PC-3 (cell line): ENCODE measurements at regions of chr14 and their contacts with region 1.

Region 1: GRCh38 chr14:21241218-21241819 is 27.9 kb downstream of the HNRNPC start:
- DNase-seq: peak; percentile 56
- ATAC-seq: no peak
- H3K4me3 ChIP-seq: no peak overlapping the region
- H3K27ac ChIP-seq: no peak overlapping the region
- H3K4me1 ChIP-seq: no peaks in the 10 kb centered on the region
- H3K27me3 ChIP-seq: no peaks in the 10 kb centered on the region
- CTCF ChIP-seq: peak; percentile 61

Region 2: DNA sequence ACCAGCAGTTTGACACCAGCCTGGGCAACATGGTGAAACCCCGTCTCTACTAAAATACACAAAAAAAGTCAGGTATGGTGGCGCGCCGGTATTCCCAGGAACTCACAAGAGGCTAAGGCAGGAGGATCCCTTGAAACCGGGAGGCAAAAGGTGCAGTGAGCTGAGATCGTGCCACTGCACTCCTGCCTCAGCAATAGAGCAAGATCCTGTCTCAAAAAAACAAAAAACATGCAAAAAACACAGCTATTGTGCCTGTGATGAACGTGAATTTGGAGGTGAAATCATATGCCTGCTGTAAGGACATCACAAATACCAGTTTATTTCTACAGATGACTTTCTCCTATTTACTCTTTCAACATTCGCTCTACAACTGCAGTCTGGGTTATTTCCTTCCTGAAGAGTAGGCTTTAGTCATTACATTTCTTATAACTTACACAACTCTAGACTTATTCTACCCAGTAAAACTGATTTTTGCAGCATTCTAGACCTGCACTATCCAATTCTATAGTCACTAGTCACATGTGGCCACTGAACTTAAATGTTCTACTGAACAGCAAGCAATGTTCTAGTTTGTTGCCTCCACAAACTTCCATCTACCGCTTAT is 20.3 kb before region 1 on chr14:
- CTCF ChIA-PET with region 1: interaction called, 16 read pairs
- POLR2A ChIA-PET with region 1: no interaction called
- intact Hi-C with region 1: no loop called
- DNase-seq: no peak
- ATAC-seq: no peak
- H3K4me3 ChIP-seq: no peak overlapping the region
- H3K27ac ChIP-seq: no peak overlapping the region
- H3K4me1 ChIP-seq: peaks cover 34% of the 10 kb centered on the region
- H3K27me3 ChIP-seq: no peaks in the 10 kb centered on the region
- CTCF ChIP-seq: no peak

Region 3: GRCh38 chr14:21263656-21264411 is 22.5 kb after region 1 on chr14:
- CTCF ChIA-PET with region 1: no interaction called
- POLR2A ChIA-PET with region 1: no interaction called
- intact Hi-C with region 1: no loop called
- DNase-seq: peak; percentile 77
- ATAC-seq: peak; percentile 87
- H3K4me3 ChIP-seq: peak overlapping the region; percentile 97
- H3K27ac ChIP-seq: peak overlapping the region; percentile 51
- H3K4me1 ChIP-seq: peaks cover 41% of the 10 kb centered on the region
- H3K27me3 ChIP-seq: no peaks in the 10 kb centered on the region
- CTCF ChIP-seq: no peak

Region 4: GRCh38 chr14:21395444-21395843 is 154.1 kb after region 1 on chr14:
- CTCF ChIA-PET with region 1: no interaction called
- POLR2A ChIA-PET with region 1: no interaction called
- intact Hi-C with region 1: loop called (anchors 5 kb)
- DNase-seq: peak; percentile 28
- ATAC-seq: no peak
- H3K4me3 ChIP-seq: no peak overlapping the region
- H3K27ac ChIP-seq: no peak overlapping the region
- H3K4me1 ChIP-seq: no peaks in the 10 kb centered on the region
- H3K27me3 ChIP-seq: no peaks in the 10 kb centered on the region
- CTCF ChIP-seq: peak; percentile 49; the same call in 1 of the 2 replicates